ENCODE measurements at regions of chr17 and their contacts with region 1.

Region 1: DNA sequence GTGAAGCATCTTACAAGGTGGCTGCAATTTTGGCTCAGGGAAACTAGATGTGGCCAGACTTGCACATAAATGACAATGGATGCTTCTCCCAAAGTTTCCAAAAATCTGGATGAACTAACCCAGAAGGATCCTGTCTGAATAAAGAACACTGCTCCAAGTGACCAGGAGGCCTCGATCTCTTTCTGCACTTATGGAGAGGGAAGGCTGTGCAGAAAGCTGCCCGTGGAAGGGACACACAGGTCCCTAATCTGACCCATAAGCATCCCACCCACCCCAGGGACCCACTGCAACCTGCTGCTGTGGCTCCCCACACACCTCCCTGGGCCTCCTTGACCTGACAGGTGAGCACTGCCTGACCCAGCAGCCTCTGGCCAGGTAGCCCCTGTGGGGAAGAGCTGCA is 74.6 kb upstream of the SEC14L1 start:
- DNase-seq: no peak
- ATAC-seq: no peak
- H3K4me3 Mint-ChIP-seq: no peak overlapping the region
- H3K27ac Mint-ChIP-seq: no peak overlapping the region
- H3K4me1 Mint-ChIP-seq: peaks cover 18% of the 10 kb centered on the region
- H3K27me3 Mint-ChIP-seq: no peaks in the 10 kb centered on the region
- CTCF ChIP-seq: no peak

Region 2: GRCh38 chr17:77083531-77083930 is 17.4 kb after region 1 on chr17:
- CTCF ChIA-PET with region 1: interaction called, 13 read pairs
- POLR2A ChIA-PET with region 1: no interaction called
- DNase-seq: no peak
- ATAC-seq: no peak
- H3K4me3 Mint-ChIP-seq: no peak overlapping the region
- H3K27ac Mint-ChIP-seq: no peak overlapping the region
- H3K4me1 Mint-ChIP-seq: peaks cover 11% of the 10 kb centered on the region
- H3K27me3 Mint-ChIP-seq: peaks cover 4% of the 10 kb centered on the region; the same call in 1 of the 2 replicates
- CTCF ChIP-seq: no peak

Region 3: DNA sequence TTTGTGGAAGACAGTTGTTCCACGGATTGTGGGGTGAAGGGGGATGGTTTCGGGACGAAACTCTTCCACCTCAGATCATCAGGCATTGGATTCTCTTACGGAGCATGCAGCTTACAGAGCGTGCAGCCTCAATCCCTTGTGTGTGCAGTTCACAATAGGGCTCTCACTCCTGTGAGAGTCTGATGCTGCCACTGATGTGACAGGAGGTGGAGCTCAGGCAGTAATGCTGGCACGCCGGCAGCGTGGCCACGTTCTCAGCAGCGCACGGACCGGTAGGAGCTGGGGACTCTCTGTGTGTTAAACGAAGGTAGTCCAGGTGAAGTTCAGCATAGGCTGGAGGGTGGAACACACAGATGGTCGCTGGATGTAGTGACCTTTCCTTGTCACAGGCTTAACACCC is 112.4 kb after region 1 on chr17:
- CTCF ChIA-PET with region 1: no interaction called
- POLR2A ChIA-PET with region 1: no interaction called
- DNase-seq: no peak
- ATAC-seq: no peak
- H3K4me3 Mint-ChIP-seq: no peak overlapping the region
- H3K27ac Mint-ChIP-seq: peak overlapping the region; percentile 66; the same call in 1 of the 2 replicates
- H3K4me1 Mint-ChIP-seq: peaks cover 23% of the 10 kb centered on the region
- H3K27me3 Mint-ChIP-seq: no peaks in the 10 kb centered on the region; the same call in 1 of the 2 replicates
- CTCF ChIP-seq: no peak

Measured in WTC11 (cell line).